H1 (cell line): ENCODE measurements at regions of chr16 and their contacts with region 1.

Region 1: DNA sequence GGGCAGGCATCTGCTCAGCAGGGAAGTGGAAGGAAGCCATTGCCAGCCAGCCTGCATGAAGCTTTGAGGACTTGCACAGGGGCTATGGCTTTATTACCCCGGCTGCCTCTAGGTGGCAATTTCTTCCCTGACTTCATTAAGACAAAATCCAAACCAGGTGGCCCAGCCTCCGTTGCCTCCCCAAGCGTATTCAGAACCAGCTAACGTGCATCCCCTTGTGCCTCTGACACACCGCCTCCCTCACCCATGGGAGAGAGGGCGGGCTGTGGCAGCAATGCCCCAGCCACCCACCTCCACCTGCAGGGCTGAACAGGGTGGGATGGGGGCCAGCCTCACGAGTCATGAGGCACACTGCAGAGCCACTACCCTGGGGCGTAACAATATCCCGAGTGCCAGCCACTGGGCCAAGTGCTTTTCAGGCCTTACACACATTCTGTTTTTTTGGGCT is 6.8 kb downstream of the KIFC3 start:
- DNase-seq: peak in 1 of 2 experiments; percentile 72
- H3K4me3 ChIP-seq: no peak overlapping the region
- H3K27ac ChIP-seq: no peak overlapping the region
- H3K4me1 ChIP-seq: peaks cover 0 to 32% (median 17%) of the 10 kb centered on the region in 4 experiments; a peak in 6 of 7 replicates
- H3K27me3 ChIP-seq: peaks cover 0 to 17% (median 14%) of the 10 kb centered on the region in 4 experiments; a peak in 6 of 7 replicates
- CTCF ChIP-seq: peak; percentile 46 to 68 (median 63)
- EP300 ChIP-seq: no peak
- POLR2A ChIP-seq: no peak
- RAD21 ChIP-seq: peak; percentile 34 to 64; a peak in 3 of 4 replicates

Region 2: GRCh38 chr16:57700781-57701551 is 94.5 kb before region 1 on chr16:
- CTCF ChIA-PET with region 1: no interaction called
- POLR2A ChIA-PET with region 1: no interaction called
- DNase-seq: no peak
- H3K4me3 ChIP-seq: no peak overlapping the region
- H3K27ac ChIP-seq: no peak overlapping the region
- H3K4me1 ChIP-seq: no peaks in the 10 kb centered on the region
- H3K27me3 ChIP-seq: no peaks in the 10 kb centered on the region; a peak in 1 of 7 replicates
- CTCF ChIP-seq: no peak
- EP300 ChIP-seq: no peak
- POLR2A ChIP-seq: no peak
- RAD21 ChIP-seq: no peak

Region 3: GRCh38 chr16:57810197-57811031 is 15.0 kb after region 1 on chr16:
- CTCF ChIA-PET with region 1: interaction called, 13 read pairs
- POLR2A ChIA-PET with region 1: interaction called, 3 read pairs
- DNase-seq: no peak
- H3K4me3 ChIP-seq: no peak overlapping the region
- H3K27ac ChIP-seq: no peak overlapping the region
- H3K4me1 ChIP-seq: peaks cover 1 to 19% (median 10%) of the 10 kb centered on the region in 4 experiments; a peak in 5 of 7 replicates
- H3K27me3 ChIP-seq: peaks cover 0 to 2% (median 0%) of the 10 kb centered on the region in 4 experiments; a peak in 3 of 7 replicates
- CTCF ChIP-seq: no peak
- EP300 ChIP-seq: no peak
- POLR2A ChIP-seq: 0 out of 3 replicates have a peak, but pooled peaks of 1 of the 2 experiments have one; percentile 15
- RAD21 ChIP-seq: no peak

Region 4: DNA sequence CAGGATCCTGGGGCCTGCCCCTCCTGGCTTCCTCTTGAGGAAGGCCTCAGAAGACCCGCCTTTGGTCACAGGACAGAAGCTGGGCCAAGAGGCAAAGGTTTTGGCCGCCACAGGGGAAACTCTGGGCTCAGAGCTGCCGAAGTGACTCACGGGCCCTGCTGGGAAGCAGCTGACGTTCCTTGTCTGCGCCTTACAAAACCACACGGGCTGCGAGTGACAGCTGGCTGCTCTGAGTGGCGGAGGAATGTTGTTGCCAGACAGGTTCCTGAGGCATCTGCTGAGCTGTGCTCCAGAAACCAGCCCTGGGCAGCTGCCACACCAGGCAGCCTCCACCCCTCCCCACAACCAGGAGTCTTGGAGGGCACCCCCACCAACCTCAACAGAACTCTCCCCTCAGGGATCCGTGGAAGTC is 20.9 kb after region 1 on chr16:
- CTCF ChIA-PET with region 1: interaction called, 14 read pairs
- POLR2A ChIA-PET with region 1: interaction called, 3 read pairs
- DNase-seq: no peak
- H3K4me3 ChIP-seq: no peak overlapping the region
- H3K27ac ChIP-seq: no peak overlapping the region
- H3K4me1 ChIP-seq: peaks cover 0 to 14% (median 8%) of the 10 kb centered on the region in 4 experiments; a peak in 6 of 7 replicates
- H3K27me3 ChIP-seq: peaks cover 0 to 2% (median 0%) of the 10 kb centered on the region in 4 experiments; a peak in 3 of 7 replicates
- CTCF ChIP-seq: no peak
- EP300 ChIP-seq: peak in 1 of 2 experiments; percentile 43; a peak in 1 of 3 replicates
- POLR2A ChIP-seq: no peak
- RAD21 ChIP-seq: no peak; a peak in 1 of 4 replicates

Region 5: GRCh38 chr16:57828272-57829161 is 33.1 kb after region 1 on chr16:
- CTCF ChIA-PET with region 1: interaction called, 11 read pairs
- POLR2A ChIA-PET with region 1: no interaction called
- DNase-seq: no peak
- H3K4me3 ChIP-seq: no peak overlapping the region
- H3K27ac ChIP-seq: no peak overlapping the region
- H3K4me1 ChIP-seq: no peaks in the 10 kb centered on the region; a peak in 2 of 7 replicates
- H3K27me3 ChIP-seq: no peaks in the 10 kb centered on the region
- CTCF ChIP-seq: peak; percentile 41 to 59 (median 44)
- EP300 ChIP-seq: no peak
- POLR2A ChIP-seq: no peak
- RAD21 ChIP-seq: peak in 1 of 2 experiments; percentile 41; a peak in 2 of 4 replicates

Region 6: GRCh38 chr16:57834936-57835335 is 39.5 kb after region 1 on chr16:
- CTCF ChIA-PET with region 1: interaction called, 12 read pairs
- POLR2A ChIA-PET with region 1: no interaction called
- DNase-seq: no peak
- H3K4me3 ChIP-seq: no peak overlapping the region
- H3K27ac ChIP-seq: no peak overlapping the region
- H3K4me1 ChIP-seq: peaks cover 6 to 12% (median 9%) of the 10 kb centered on the region in 4 experiments
- H3K27me3 ChIP-seq: no peaks in the 10 kb centered on the region
- CTCF ChIP-seq: no peak
- EP300 ChIP-seq: no peak
- POLR2A ChIP-seq: no peak
- RAD21 ChIP-seq: no peak

Region 7: GRCh38 chr16:57840833-57841232 is 45.4 kb after region 1 on chr16:
- CTCF ChIA-PET with region 1: interaction called, 12 read pairs
- POLR2A ChIA-PET with region 1: no interaction called
- DNase-seq: no peak
- H3K4me3 ChIP-seq: no peak overlapping the region
- H3K27ac ChIP-seq: no peak overlapping the region
- H3K4me1 ChIP-seq: peaks cover 7 to 17% (median 9%) of the 10 kb centered on the region in 4 experiments
- H3K27me3 ChIP-seq: 0 out of 7 replicates have a peak, but pooled peaks cover 0 to 1% (median 0%) of the 10 kb centered on the region in 4 experiments
- CTCF ChIP-seq: no peak
- EP300 ChIP-seq: no peak
- POLR2A ChIP-seq: no peak
- RAD21 ChIP-seq: no peak

Region 8: DNA sequence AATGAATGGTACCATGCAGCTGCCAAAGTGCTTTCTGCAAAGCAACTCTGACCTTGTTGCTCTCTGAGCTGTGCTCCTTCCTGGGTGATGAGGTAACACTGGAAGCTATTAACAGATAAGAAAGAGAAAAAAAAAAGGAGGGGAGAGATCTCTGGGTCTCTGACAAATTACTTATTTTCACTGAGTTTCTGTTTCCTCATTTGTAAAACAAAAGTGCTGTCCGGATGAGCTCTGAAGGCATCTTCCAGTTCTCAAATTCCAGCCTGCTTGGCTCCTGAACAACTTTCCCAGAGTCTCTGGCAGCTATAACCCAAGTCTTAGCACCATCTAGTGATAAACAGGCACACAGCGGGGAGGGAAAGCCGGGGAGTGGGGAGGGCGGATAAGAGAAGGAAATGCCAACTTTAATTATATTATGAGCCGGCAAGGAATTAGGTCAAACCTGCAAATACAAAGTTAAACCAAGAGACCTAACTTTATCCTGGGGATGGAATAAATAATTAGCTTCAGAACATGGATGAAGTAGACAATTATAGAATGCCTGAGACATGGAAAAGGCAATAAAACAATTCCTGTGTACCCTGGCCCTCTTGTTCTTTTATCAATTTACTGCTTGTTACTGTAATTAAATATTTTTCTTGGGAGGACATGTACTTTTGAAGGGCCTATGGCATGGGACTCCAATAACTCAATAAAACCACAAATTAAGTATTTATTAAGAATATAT is 68.1 kb after region 1 on chr16:
- CTCF ChIA-PET with region 1: interaction called, 71 read pairs
- POLR2A ChIA-PET with region 1: no interaction called
- DNase-seq: peak in 1 of 2 experiments; percentile 49
- H3K4me3 ChIP-seq: 0 out of 8 replicates have a peak overlapping the region, but pooled peaks of 1 of the 4 experiments have one; percentile 13
- H3K27ac ChIP-seq: no peak overlapping the region
- H3K4me1 ChIP-seq: peaks cover 5 to 14% (median 8%) of the 10 kb centered on the region in 4 experiments
- H3K27me3 ChIP-seq: no peaks in the 10 kb centered on the region
- CTCF ChIP-seq: peak; percentile 33 to 65 (median 49)
- EP300 ChIP-seq: no peak
- POLR2A ChIP-seq: no peak
- RAD21 ChIP-seq: peak; percentile 70 to 80